ENCODE measurements at regions of chr1 and their contacts with region 1.

Region 1: GRCh38 chr1:168439456-168440375 is 104.1 kb downstream of the XCL2 start:
- DNase-seq: peak; percentile 35 to 59
- ATAC-seq: peak; percentile 77 to 84
- H3K4me3 ChIP-seq: peak overlapping the region in 1 of 4 donors; percentile 18
- H3K27ac ChIP-seq: no peak overlapping the region
- H3K4me1 ChIP-seq: no peaks in the 10 kb centered on the region
- H3K27me3 ChIP-seq: no peaks in the 10 kb centered on the region
- CTCF ChIP-seq: peak; percentile 46 to 64 (median 51)
- POLR2A ChIP-seq: no peak

Region 2: DNA sequence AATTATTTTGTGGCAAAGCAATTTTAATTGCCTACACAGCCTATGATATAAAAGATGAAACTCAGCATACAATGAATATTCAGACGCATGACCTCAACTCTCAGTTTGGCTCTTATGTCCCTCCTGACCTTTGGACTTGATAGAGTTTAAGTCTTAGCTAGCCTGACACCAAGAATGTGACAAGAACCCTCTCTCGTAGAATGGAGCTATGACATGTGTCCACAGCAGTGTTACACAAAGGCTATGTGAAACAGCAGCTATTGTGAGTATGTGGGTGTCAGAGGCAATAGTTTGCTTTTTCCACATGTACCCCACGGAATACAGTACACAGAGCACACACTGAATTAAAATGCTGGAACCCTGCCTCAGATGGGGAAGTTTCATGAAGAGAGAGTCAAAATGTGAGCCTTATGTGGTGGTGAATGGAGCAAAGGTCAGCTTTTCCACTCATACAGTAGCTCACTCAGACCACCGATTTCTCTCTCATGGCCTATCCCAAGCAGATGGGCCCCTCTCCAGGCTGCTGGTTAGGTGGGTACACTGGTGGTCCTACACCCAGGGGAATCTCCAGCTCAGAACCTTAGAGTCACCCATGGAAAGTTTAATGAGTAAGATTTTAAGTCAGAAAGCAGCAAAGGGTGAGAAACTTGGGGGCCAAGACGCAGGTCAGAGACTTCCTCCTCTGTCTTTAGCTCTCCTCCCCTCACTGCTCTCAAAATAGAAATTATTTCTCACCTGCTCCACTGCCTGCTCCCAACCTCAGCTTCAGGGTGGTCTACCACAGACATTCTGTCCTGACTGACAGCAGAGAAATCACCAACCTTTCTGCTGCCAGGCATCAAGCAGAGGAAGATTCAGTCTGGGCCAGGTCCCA is 114.2 kb after region 1 on chr1:
- in situ Hi-C with region 1: loop called in 1 of 4 experiments (anchors 25 kb)
- intact Hi-C with region 1: no loop called
- DNase-seq: no peak
- ATAC-seq: no peak
- H3K4me3 ChIP-seq: no peak overlapping the region
- H3K27ac ChIP-seq: no peak overlapping the region
- H3K4me1 ChIP-seq: no peaks in the 10 kb centered on the region
- H3K27me3 ChIP-seq: no peaks in the 10 kb centered on the region
- CTCF ChIP-seq: no peak
- POLR2A ChIP-seq: no peak

Region 3: GRCh38 chr1:168567007-168567406 is 127.3 kb after region 1 on chr1:
- in situ Hi-C with region 1: loop called in 3 of 4 experiments (anchors 5 to 25 kb)
- intact Hi-C with region 1: loop called (anchors 5 kb)
- DNase-seq: no peak
- ATAC-seq: no peak
- H3K4me3 ChIP-seq: no peak overlapping the region
- H3K27ac ChIP-seq: no peak overlapping the region
- H3K4me1 ChIP-seq: no peaks in the 10 kb centered on the region
- H3K27me3 ChIP-seq: no peaks in the 10 kb centered on the region
- CTCF ChIP-seq: no peak
- POLR2A ChIP-seq: no peak

Region 4: DNA sequence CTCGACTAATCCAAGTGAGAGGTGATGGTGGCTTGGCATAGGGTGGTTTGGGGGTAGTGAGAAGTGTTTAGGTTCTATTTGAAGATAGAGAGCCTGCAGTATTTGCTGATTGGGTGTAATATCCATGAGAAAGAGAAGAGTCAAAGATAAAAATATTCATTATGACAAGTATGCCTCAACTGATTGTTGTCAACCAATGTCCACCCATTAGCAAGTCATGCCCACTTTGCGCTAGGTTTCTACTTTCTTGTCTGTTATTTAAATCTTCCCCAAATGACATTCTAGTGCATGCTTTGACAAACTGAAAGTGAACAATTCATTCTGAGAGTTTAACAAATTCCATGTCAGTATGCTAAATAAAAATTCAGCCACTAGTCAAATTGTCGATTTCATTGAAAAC is 132.9 kb after region 1 on chr1:
- in situ Hi-C with region 1: loop called in 3 of 4 experiments (anchors 5 to 25 kb)
- intact Hi-C with region 1: loop called (anchors 5 kb)
- DNase-seq: no peak
- ATAC-seq: no peak
- H3K4me3 ChIP-seq: no peak overlapping the region
- H3K27ac ChIP-seq: no peak overlapping the region
- H3K4me1 ChIP-seq: no peaks in the 10 kb centered on the region
- H3K27me3 ChIP-seq: no peaks in the 10 kb centered on the region
- CTCF ChIP-seq: no peak
- POLR2A ChIP-seq: no peak

Region 5: DNA sequence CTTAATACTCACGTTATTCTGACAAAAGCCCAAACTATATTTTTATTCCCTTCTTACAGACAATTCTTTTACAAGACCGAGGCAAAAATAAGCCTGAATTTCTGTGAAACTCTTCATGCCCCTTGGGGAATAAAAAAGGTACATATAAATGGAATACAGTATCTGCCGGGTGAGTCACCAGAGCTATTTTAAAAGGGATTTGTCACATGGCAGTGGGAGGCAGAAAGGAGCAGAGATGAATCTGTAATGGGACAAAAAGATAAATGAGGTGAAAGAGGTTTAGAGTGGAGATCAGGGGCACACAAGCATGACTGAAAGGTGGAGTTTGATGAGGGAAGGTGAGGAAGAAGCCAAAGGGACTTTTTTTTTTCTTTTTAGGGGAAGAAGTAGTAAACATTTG is 145.5 kb after region 1 on chr1:
- in situ Hi-C with region 1: loop called in 1 of 4 experiments (anchors 10 kb)
- intact Hi-C with region 1: no loop called
- DNase-seq: no peak
- ATAC-seq: peak; percentile 58 to 84
- H3K4me3 ChIP-seq: no peak overlapping the region
- H3K27ac ChIP-seq: no peak overlapping the region
- H3K4me1 ChIP-seq: peaks cover 0 to 7% of the 10 kb centered on the region in 2 donors
- H3K27me3 ChIP-seq: no peaks in the 10 kb centered on the region
- CTCF ChIP-seq: no peak
- POLR2A ChIP-seq: no peak

Region 6: DNA sequence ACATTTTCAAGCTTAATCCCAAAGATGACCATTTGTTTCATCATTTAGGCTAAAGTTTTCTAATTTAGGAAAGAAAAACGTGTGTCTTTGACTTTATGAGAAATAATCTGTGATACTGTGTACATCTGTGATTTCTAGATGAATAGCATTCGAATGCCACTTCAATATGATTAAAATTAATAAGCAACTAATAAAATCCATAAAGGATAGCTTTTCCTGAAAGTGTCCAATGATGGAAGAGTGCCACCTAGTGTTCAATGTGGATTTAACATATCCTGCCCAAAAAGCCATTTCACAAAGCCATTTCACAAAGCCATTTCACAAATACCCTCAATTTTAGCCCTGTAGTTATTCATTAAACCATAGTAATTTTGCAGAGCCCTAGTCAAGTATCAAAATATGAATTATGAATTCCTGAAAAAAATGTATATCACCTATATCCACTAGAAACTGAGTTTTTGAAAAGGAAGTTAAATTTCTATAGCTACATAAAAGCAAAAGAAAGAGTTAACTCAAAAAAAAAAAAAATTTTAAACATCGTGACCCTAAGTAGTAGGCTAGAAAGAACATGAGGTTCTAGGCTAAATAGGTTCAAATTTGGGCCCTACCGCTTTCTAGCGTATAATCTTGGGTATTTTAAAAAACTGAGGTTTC is 908.8 kb after region 1 on chr1:
- in situ Hi-C with region 1: loop called in 1 of 4 experiments (anchors 25 kb)
- intact Hi-C with region 1: no loop called
- DNase-seq: no peak
- ATAC-seq: peak in 1 of 2 donors; percentile 54
- H3K4me3 ChIP-seq: no peak overlapping the region
- H3K27ac ChIP-seq: no peak overlapping the region
- H3K4me1 ChIP-seq: no peaks in the 10 kb centered on the region
- H3K27me3 ChIP-seq: no peaks in the 10 kb centered on the region
- CTCF ChIP-seq: peak; percentile 65 to 85 (median 82)
- POLR2A ChIP-seq: no peak